ENCODE measurements at regions of chr6 and their contacts with region 1.

Region 1: DNA sequence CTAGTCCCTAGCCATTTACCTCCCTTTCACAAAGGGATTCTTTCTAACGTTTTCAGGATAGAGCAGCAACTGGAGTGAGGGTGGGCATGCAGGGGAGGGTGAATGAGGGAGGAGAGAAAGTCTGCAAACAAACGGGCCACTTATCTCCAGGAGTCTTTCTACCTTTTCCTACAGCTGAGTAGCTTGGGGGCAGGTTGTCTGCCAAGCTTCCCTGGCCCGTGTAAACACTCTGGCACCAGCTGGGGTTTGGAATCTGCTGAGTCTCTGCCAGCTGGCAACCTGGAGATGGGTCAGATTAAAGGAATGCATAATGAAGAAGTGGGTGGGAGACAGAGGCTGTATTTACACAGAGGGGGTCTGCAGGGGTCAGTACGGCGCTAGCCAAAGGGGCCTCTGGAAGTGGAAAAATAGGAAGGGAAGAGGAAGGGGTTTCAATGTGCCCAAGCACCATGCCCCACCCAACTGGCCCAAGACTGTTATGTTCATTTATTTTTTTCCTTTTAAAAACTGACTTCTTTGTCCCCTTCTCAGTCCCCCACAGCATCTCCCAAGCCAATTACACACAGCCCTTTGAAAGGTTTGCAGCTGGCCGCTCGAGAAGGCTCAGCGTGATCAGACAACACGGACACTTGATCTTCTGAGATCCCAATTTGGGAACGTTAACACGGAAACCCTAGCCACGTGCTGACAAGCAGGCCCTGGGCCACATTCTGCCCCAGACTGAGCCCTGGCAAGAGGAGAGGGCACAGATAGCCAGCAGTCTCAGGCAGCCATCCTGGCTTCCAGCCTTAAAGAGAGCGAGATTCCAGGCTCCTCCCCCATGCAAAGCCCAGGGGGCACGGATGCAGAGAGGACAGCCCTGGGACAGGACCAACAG is 25.2 kb downstream of the TRAM2 start:
- DNase-seq: peak; percentile 87
- H3K4me3 ChIP-seq: peak overlapping the region; percentile 22; the same call in 1 of the 2 replicates
- H3K27ac ChIP-seq: peak overlapping the region; percentile 98
- H3K27me3 ChIP-seq: no peaks in the 10 kb centered on the region
- CTCF ChIP-seq: peak; percentile 5; the same call in 1 of the 2 replicates

Region 2: DNA sequence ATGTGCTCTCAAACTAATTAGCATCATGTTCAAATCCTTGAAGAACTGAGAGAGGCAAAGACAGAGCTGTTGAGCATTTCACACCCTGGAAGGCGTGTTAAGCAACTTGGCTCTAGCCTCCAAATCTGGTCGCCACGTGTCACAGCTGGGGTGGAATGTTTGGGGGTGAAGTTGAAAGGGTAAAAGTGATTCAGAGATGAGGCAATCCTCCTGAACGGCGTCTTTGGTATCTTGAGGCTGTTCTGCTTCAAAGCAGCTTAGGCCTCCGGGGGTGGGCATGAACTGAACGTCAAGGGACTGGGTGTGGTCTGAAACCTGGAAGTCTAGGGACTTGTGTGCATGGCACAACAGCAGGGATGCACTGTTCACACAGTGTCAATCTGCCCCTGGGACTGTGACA is 37.1 kb before region 1 on chr6:
- CTCF ChIA-PET with region 1: no interaction called
- POLR2A ChIA-PET with region 1: interaction called, 11 read pairs
- DNase-seq: peak; percentile 48
- H3K4me3 ChIP-seq: no peak overlapping the region
- H3K27ac ChIP-seq: peak overlapping the region; percentile 89
- H3K27me3 ChIP-seq: no peaks in the 10 kb centered on the region
- CTCF ChIP-seq: no peak

Region 3: GRCh38 chr6:52610745-52611355 is 59.2 kb after region 1 on chr6:
- CTCF ChIA-PET with region 1: no interaction called
- POLR2A ChIA-PET with region 1: no interaction called
- DNase-seq: no peak
- H3K4me3 ChIP-seq: no peak overlapping the region
- H3K27ac ChIP-seq: no peak overlapping the region
- H3K27me3 ChIP-seq: no peaks in the 10 kb centered on the region
- CTCF ChIP-seq: no peak

Measured in AG04450 (cell line).